Lower leg skin (tissue), 4 donors: ENCODE measurements at regions of chr11 and their contacts with region 1.

Region 1: DNA sequence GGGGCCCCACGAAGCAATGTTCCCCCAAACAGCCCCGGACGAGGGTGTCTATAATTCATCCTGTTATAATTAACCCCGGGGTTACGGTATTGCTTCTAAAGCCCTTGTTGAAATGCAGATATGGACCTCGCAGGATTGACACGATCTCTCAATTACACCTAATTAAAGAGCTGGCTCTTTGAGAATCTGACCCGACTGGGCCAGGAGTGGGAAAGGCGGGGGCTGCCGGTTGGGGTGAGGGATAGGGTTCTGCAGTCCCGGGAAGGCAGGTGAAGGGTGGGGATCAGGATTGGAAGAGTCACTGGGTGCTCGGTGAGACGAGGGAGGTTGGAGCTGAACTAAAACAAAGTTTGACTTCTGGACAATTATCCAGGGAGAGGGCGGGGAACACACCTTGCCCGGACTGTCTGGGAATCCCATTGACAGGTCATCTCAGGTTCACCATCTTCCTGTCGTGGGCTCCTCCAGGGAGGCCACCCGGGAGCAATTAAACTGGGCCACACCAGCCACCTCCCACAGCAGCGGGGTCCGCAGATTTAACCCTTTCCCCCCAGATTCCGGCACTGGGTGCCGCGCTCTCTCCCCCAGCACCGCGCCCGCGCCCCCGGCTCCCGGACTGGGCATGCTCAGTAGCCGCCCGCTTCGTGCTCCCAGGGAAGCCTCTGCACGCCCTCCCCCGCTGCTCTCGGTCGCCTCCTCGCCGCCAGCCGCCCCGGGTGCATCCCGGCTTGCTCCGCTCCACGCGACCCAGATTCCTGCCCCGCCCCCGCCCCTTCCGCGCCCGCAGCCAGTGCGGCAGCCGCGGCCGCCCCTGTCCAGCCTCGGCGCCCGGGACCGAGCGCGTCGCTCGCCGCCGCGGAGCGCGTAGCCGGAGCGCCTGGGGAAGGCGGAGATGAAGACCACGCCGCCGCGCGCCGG is at the start of gene ELMOD1:
- DNase-seq: no peak
- H3K4me3 ChIP-seq: peak within 1 kb of the TSS; percentile 40
- CTCF ChIP-seq: no peak
- POLR2A ChIP-seq: no peak
- total RNA-seq, gene ELMOD1: 48.2 to 164 (median 72.3) TPM

Region 2: GRCh38 chr11:107648242-107648641 is 57.5 kb after region 1 on chr11:
- intact Hi-C with region 1: no loop called
- DNase-seq: no peak
- H3K4me3 ChIP-seq: no peak overlapping the region
- CTCF ChIP-seq: no peak
- POLR2A ChIP-seq: no peak

Region 3: GRCh38 chr11:107676336-107677057 is 85.8 kb after region 1 on chr11:
- intact Hi-C with region 1: loop called (anchors 10 kb)
- DNase-seq: no peak
- H3K4me3 ChIP-seq: no peak overlapping the region
- CTCF ChIP-seq: no peak
- POLR2A ChIP-seq: no peak